ENCODE measurements at regions of chr10 and their contacts with region 1.

Region 1: DNA sequence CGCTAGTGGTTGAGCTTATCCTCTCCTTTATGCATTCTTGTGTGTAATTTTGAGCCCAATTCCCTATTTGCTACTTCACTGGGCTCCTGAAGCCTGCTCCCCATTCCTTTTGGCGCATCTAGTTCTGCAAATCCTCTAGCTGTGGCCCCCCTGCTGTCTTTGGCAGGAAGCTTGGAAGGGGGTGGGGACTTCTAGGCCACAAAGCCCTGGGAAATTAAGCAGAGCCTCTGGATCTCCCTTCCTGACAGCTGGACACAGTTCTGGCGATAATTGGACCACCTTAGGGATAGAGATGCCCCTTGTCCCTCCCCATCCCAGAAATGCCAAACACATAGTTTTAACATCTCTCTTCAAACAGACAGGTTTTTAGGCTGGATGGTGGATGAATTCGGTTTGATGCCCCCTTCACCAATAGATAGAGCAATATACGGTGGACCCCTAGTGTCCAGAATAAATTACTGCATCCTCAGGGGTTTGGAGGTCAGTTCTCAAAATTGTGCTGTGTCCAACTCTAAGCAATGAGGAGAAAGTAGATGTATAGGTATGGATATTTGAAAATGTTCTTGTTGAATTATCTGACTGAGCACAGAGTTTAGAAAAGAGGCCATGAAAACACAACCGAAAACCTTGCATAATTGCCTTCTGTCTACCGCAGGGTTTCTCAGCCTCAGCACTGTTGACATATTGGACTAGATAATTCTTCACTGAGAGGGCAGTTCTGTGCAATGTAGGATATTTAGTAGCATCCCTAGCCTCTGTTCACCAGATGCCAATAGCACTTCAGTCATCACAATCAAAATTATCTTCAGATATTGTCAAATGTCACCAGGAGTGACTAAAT is 75.5 kb downstream of the PAPSS2 start:
- DNase-seq: peak; percentile 7
- H3K4me3 ChIP-seq: no peak overlapping the region
- H3K27me3 ChIP-seq: no peaks in the 10 kb centered on the region
- CTCF ChIP-seq: peak; percentile 64

Region 2: DNA sequence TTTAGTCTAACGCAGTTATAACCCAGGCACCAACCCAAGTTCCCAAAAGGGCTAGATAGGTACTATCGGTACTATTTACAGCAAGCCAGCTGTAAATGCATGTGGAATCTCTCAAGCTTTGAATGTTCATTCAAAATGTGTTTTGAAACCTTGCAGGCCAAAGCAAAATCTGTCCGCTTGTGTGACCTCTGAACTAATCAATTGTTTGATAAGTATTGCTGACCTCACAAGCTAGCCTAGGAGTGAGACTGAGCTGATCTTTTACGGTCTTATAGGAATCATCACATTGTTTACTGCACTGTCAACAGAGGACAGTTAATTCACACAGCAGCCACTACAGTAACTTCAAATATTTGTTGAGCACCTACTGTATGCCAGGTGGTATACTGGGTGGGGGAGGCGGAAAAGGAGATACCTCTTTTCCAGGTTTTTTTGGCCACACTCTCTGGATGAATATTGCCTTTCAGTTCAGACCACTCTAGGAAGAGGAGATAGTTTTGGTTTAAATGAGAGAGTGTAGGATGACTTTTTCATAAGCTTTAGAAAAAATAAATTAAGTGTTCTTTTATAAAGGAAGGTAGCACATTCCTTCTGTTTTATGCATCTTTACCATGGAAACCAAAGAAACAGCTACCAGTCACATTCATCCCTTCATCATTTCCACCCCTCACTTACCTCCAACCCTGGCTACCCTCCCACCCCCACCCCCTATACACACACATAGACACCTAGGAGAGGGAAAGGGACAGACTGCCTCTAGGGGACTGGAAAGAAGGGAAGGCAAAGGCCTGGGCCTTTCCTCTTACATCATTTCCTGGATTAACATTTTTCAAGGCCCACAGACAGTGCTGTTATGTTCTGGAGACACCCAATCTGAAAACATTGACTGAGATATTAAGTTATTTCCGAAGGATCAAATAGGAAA is 73.1 kb before region 1 on chr10:
- CTCF ChIA-PET with region 1: interaction called, 10 read pairs
- POLR2A ChIA-PET with region 1: no interaction called
- DNase-seq: no peak
- H3K4me3 ChIP-seq: peak overlapping the region; percentile 89
- H3K27me3 ChIP-seq: no peaks in the 10 kb centered on the region
- CTCF ChIP-seq: no peak

Region 3: GRCh38 chr10:87721781-87722180 is 13.4 kb before region 1 on chr10:
- CTCF ChIA-PET with region 1: interaction called, 14 read pairs
- POLR2A ChIA-PET with region 1: no interaction called
- DNase-seq: no peak
- H3K4me3 ChIP-seq: no peak overlapping the region
- H3K27me3 ChIP-seq: no peaks in the 10 kb centered on the region
- CTCF ChIP-seq: no peak

Region 4: DNA sequence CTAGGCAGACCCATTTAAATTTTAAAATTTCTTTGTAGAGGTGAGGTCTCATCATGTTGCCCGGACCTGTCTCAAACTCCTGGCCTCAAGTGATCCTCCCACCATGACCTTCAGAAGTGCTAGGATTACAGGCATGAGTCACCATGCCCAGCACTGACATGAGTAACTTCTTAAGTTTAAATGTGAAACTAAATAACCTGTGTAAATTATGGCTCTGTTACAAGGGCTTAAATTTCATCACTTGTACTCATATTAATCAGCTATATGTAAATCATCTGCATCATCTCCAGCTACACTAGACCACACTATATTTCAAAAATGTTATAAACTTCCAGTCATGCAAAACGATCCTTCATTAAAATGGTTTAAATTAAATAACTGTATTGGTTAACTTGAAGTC is 26.7 kb after region 1 on chr10:
- CTCF ChIA-PET with region 1: no interaction called
- POLR2A ChIA-PET with region 1: no interaction called
- DNase-seq: no peak
- H3K4me3 ChIP-seq: no peak overlapping the region
- H3K27me3 ChIP-seq: no peaks in the 10 kb centered on the region
- CTCF ChIP-seq: no peak